ENCODE measurements at regions of chr17 and their contacts with region 1.

Region 1: DNA sequence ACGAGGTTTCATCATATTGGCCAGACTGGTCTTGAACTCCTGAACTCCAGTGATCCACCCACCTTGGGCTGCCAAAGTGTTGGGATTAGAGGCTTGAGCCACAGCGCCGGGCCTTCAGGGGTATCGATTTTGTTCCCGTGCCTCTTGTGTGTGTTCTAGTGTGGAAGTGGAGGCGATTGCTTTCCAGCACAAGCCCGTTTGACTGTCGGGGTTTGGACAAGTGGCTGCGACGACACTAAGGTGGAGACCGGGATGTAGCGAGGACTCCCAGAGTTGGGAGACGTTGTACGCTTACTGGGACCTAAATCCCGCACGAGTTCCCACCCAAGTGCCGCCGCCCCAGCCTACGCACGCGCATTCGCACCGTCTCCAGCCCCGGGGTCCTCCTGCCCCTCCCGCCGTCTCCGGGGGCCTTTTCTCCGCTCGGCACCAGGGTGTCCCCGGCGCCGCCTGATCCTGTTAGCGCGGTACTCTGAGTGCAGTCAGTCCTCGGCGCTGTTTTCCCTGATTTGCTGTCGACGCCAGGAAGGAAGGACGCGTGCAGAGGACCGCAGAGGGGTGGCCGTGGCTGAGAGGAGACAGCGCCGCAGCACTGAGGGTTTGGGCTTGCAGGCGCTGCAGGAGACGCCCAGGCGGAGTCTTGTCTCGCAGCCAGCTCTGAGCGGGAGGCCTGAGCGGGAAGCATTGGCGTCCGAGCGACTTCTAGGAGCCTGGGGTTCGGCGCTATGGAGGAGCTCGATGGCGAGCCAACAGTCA is at the start of gene NUP85:
- DNase-seq: peak; percentile 66
- ATAC-seq: peak; percentile 91
- H3K4me3 ChIP-seq: peak within 1 kb of the TSS; percentile 77
- H3K27ac ChIP-seq: peak within 1 kb of the TSS; percentile 98
- H3K4me1 ChIP-seq: no peaks in the 10 kb centered on the region; the same call in 1 of the 2 replicates
- H3K27me3 ChIP-seq: no peaks in the 10 kb centered on the region
- CTCF ChIP-seq: no peak
- EP300 ChIP-seq: peak in 1 of 2 experiments; percentile 45; a peak in 1 of 4 replicates
- POLR2A ChIP-seq: peak; percentile 93
- RAD21 ChIP-seq: no peak
- polyA plus RNA-seq, gene NUP85: 127 to 135 TPM

Region 2: DNA sequence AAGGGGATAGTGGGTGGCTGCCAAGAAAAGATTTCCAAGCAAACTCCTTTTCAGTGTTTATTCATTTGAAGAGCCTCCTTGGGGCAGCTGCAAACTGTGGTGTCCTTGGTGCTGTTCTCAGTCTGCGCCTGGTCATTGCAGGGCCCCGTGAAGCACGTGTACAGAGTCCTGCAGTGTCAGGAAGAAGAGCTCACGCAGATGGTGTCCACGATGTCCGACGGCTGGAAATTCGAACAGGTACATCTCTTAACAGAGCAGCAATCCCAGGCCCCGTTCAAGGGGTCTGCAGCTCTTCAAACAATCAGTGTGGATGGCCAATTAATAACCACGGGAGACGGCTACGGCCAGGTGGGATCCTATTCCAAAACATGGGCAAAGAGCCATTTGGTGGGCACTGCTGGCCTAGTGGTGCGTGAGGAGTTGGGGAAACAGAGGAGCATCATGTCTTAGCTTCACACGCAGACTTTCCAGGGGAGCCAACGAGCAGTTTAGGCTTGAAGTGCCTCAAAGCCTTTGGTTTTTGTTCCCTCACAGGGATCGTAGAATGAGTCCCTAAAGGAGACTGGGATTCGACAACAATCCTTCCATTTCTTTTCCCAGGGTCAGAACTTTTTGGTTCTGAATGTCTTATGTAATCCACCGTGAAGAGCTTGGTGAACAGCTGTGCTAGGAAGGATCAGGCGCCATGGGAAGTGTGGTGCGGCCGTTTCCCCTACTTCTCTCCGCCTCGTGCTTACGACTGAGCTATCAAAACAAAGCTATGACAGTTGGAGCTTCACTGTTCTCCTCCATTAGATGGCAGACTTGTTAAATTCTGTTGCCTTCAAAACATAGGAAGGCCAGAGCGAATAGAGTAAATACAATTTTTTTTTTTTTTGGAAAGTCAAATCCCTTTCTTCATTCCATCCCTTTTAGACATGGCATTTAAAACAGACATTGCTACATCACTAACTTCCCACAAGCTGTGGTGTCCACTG is 145.6 kb before region 1 on chr17:
- CTCF ChIA-PET with region 1: interaction called, 17 read pairs
- POLR2A ChIA-PET with region 1: no interaction called
- RAD21 ChIA-PET with region 1: interaction called, 6 read pairs
- SMC1A ChIA-PET with region 1: interaction called, 4 read pairs
- in situ Hi-C with region 1: no loop called
- intact Hi-C with region 1: no loop called
- DNase-seq: no peak
- ATAC-seq: no peak
- H3K4me3 ChIP-seq: no peak overlapping the region
- H3K27ac ChIP-seq: no peak overlapping the region
- H3K4me1 ChIP-seq: no peaks in the 10 kb centered on the region
- H3K27me3 ChIP-seq: no peaks in the 10 kb centered on the region
- CTCF ChIP-seq: peak in 2 of 3 experiments; percentile 19 to 34; a peak in 2 of 6 replicates
- EP300 ChIP-seq: no peak
- POLR2A ChIP-seq: no peak
- RAD21 ChIP-seq: peak; percentile 38; the same call in 1 of the 2 replicates

Region 3: DNA sequence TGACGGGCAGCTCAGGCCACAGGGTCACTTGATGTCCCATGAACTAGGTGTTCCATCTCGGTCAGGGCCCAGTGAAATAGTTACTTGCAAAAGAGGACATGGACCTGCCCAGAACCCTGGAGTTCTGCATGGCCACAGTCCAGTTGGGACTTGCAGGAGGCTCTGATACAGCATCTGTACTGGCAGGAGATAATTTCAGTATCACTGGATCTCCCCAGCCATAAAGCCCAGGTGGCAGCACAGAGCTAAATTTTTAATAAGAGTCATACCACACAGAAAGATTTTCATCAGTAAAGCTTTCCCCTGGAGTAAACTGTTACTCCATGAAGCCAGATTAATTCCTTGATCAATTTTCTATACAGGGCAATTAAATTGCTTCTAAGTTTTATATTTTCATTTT is 135.4 kb before region 1 on chr17:
- CTCF ChIA-PET with region 1: interaction called, 19 read pairs
- POLR2A ChIA-PET with region 1: interaction called, 5 read pairs
- RAD21 ChIA-PET with region 1: interaction called, 13 read pairs
- SMC1A ChIA-PET with region 1: interaction called, 4 read pairs
- in situ Hi-C with region 1: no loop called
- intact Hi-C with region 1: no loop called
- DNase-seq: no peak
- ATAC-seq: peak; percentile 68
- H3K4me3 ChIP-seq: no peak overlapping the region
- H3K27ac ChIP-seq: no peak overlapping the region
- H3K4me1 ChIP-seq: peaks cover 15% of the 10 kb centered on the region
- H3K27me3 ChIP-seq: no peaks in the 10 kb centered on the region
- CTCF ChIP-seq: peak in 2 of 3 experiments; percentile 35 to 50; a peak in 4 of 6 replicates
- EP300 ChIP-seq: no peak
- POLR2A ChIP-seq: no peak
- RAD21 ChIP-seq: 0 out of 2 replicates have a peak, but pooled peaks have one; percentile 24

Region 4: GRCh38 chr17:75131280-75132017 is 73.8 kb before region 1 on chr17 and contains the start of gene NT5C:
- CTCF ChIA-PET with region 1: interaction called, 10 read pairs
- POLR2A ChIA-PET with region 1: interaction called, 5 read pairs
- RAD21 ChIA-PET with region 1: interaction called, 8 read pairs
- SMC1A ChIA-PET with region 1: interaction called, 4 read pairs
- in situ Hi-C with region 1: no loop called
- intact Hi-C with region 1: no loop called
- DNase-seq: no peak
- ATAC-seq: peak; percentile 96
- H3K4me3 ChIP-seq: peak within 1 kb of the TSS; percentile 74
- H3K27ac ChIP-seq: peak within 1 kb of the TSS; percentile 82
- H3K4me1 ChIP-seq: peaks cover 14% of the 10 kb centered on the region
- H3K27me3 ChIP-seq: no peaks in the 10 kb centered on the region
- CTCF ChIP-seq: peak; percentile 72 to 74 (median 74); a peak in 5 of 6 replicates
- EP300 ChIP-seq: no peak; a peak in 1 of 4 replicates
- POLR2A ChIP-seq: peak; percentile 96
- RAD21 ChIP-seq: peak; percentile 34; the same call in 1 of the 2 replicates
- polyA plus RNA-seq, gene NT5C: 3.7 to 9.8 TPM

Region 5: DNA sequence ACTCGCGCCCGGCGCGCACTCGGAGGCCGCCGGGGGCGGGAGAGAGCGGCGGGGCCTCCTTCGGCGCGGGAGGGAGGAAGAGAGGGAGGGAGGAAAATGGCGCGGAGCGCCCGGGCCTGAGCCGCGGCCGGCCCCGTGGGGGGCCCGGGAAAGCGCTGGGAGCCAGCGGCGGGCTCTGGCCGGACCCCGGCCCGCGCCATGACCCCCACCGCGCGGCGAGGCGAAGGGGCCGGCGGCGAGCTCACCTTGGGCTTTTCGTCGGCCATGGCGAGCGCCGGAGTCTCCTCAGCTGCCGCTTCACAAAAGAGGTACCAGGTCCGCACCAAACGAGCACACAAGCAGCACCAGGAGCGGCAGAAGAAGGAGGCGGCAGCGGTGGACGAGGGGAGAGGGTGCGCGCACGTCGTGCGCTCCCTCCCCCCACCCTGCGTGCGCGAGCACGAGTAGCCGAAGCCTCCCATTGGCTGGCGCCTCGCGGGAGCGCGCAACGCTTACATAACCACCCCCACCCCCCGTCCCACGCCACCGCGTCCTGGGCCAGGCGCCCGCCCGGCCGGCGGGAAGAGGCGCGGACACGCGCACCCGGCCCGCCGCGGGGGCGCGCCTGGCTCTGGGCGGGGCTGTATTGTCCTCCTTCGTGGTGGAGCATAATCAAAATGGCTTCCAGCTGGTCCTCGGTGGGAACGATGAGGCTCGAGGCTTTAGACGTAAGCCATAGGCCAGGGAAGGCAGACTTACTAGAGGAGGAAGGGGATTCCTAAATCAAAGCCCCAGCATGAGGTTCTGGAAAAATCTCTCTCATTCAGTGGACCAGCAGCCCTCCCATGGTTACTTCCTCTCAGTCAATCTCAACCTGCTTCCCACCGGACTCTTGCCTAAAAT is 22.4 kb before region 1 on chr17 and contains the start of gene SUMO2:
- CTCF ChIA-PET with region 1: interaction called, 58 read pairs
- POLR2A ChIA-PET with region 1: interaction called, 7 read pairs
- RAD21 ChIA-PET with region 1: interaction called, 5 read pairs
- SMC1A ChIA-PET with region 1: interaction called, 10 read pairs
- in situ Hi-C with region 1: no loop called
- intact Hi-C with region 1: no loop called
- DNase-seq: peak; percentile 85
- ATAC-seq: peak; percentile 86
- H3K4me3 ChIP-seq: peak within 1 kb of the TSS; percentile 92
- H3K27ac ChIP-seq: peak within 1 kb of the TSS; percentile 95
- H3K4me1 ChIP-seq: no peaks in the 10 kb centered on the region
- H3K27me3 ChIP-seq: no peaks in the 10 kb centered on the region
- CTCF ChIP-seq: peak; percentile 9 to 43 (median 15); a peak in 3 of 6 replicates
- EP300 ChIP-seq: no peak
- POLR2A ChIP-seq: peak; percentile 94
- RAD21 ChIP-seq: no peak
- polyA plus RNA-seq, gene SUMO2: 709 to 767 TPM

Region 6: GRCh38 chr17:75191584-75191983 is 13.6 kb before region 1 on chr17:
- CTCF ChIA-PET with region 1: interaction called, 58 read pairs
- POLR2A ChIA-PET with region 1: interaction called, 4 read pairs
- RAD21 ChIA-PET with region 1: interaction called, 8 read pairs
- SMC1A ChIA-PET with region 1: interaction called, 11 read pairs
- in situ Hi-C with region 1: no loop called
- intact Hi-C with region 1: no loop called
- DNase-seq: no peak
- ATAC-seq: no peak
- H3K4me3 ChIP-seq: no peak overlapping the region
- H3K27ac ChIP-seq: no peak overlapping the region
- H3K4me1 ChIP-seq: peaks cover 6% of the 10 kb centered on the region; the same call in 1 of the 2 replicates
- H3K27me3 ChIP-seq: no peaks in the 10 kb centered on the region
- CTCF ChIP-seq: no peak
- EP300 ChIP-seq: no peak
- POLR2A ChIP-seq: no peak
- RAD21 ChIP-seq: no peak

Region 7: DNA sequence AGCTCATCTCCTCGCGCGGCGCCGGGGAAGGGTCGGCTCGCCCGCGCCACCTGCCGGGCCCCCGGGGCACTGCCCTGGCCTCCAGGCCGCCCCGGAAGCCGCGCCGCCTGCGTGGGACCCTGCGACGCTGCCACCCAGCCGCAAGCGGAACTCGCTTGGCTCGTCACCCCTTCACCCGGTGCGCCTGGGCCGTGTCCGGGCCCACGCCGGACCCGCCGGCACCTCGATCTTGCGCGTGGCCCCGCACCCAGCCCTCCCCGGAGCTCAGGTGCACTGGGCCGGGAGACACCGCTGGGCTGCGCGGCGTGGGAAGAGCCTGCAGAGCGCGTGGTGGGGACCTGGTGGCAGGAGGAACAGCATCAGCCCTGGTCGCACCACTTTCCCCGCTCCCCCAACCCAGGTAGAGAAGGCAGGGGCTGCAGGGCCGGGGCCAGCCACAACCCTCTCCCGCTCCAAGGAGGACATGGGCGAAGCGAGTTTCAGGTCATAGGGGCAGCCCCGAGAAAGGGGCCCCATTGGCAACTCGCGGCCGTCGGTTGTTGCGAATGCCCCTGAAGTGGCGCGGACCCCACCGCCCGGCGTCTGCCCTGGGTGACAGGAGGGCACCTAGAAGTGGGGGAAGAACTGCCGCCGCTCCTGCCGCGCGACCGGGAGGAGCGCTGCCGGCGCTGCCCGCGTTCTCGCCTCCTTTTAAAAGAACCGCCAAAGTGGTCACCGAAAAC is 66.2 kb after region 1 on chr17:
- CTCF ChIA-PET with region 1: interaction called, 5 read pairs
- POLR2A ChIA-PET with region 1: interaction called, 5 read pairs
- RAD21 ChIA-PET with region 1: interaction called, 10 read pairs
- SMC1A ChIA-PET with region 1: interaction called, 6 read pairs
- in situ Hi-C with region 1: no loop called
- intact Hi-C with region 1: no loop called
- DNase-seq: no peak
- ATAC-seq: peak; percentile 82
- H3K4me3 ChIP-seq: peak overlapping the region; percentile 70
- H3K27ac ChIP-seq: peak overlapping the region; percentile 91
- H3K4me1 ChIP-seq: peaks cover 24% of the 10 kb centered on the region
- H3K27me3 ChIP-seq: no peaks in the 10 kb centered on the region
- CTCF ChIP-seq: peak; percentile 66 to 87 (median 79); a peak in 4 of 6 replicates
- EP300 ChIP-seq: no peak
- POLR2A ChIP-seq: peak; percentile 79
- RAD21 ChIP-seq: peak; percentile 40; the same call in 1 of the 2 replicates

Measured in GM12878 (cell line).